ENCODE measurements at regions of chr18 and their contacts with region 1.

Region 1: DNA sequence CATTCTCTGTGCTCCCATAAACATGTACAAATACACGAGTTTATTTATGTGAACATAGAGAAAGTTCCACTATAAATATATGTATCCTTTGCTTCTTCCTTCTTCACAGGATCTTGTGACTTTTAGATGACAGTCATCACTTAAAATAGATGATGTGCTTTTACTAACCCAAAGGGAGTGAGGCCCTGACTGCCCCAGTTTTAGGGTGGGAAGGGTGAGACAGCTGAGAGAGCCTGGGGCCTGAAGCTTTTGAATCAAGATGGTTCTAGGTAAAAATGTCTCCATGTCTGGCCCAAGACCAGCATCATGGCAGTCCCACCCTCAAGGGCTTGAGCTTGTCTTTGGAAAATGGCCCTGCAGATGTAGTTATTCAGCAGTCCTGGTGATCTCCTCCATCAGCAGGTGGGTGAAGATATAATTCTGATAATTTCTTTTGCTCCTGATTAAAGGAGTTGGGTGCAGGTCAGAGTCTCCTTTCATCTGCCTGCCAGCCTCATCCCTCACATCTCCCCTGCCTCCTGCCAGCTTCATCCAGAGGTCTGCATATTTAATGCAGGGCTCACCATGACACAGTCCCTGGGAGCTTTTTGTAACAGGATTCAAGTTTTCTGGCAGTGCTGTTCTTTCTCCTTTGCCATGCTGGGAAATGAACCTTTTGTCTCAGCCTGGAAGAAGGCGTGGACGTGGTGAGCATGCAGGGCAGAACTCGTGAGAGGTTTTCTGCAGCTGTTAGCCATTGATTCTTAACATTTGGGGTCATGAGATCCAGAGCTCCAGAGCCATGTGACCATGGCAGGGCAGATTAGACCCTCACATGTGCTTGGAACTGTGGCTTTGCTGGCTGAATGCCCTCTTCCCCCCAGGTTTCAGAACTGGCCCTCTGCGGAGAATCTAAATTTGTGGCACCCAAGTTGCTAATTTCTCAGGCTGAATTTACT is 2.7 kb downstream of the HRH4 start:
- DNase-seq: no peak
- H3K4me3 Mint-ChIP-seq: no peak overlapping the region
- H3K27ac Mint-ChIP-seq: no peak overlapping the region
- H3K4me1 Mint-ChIP-seq: peaks cover 55% of the 10 kb centered on the region
- H3K27me3 Mint-ChIP-seq: peaks cover 34% of the 10 kb centered on the region

Region 2: DNA sequence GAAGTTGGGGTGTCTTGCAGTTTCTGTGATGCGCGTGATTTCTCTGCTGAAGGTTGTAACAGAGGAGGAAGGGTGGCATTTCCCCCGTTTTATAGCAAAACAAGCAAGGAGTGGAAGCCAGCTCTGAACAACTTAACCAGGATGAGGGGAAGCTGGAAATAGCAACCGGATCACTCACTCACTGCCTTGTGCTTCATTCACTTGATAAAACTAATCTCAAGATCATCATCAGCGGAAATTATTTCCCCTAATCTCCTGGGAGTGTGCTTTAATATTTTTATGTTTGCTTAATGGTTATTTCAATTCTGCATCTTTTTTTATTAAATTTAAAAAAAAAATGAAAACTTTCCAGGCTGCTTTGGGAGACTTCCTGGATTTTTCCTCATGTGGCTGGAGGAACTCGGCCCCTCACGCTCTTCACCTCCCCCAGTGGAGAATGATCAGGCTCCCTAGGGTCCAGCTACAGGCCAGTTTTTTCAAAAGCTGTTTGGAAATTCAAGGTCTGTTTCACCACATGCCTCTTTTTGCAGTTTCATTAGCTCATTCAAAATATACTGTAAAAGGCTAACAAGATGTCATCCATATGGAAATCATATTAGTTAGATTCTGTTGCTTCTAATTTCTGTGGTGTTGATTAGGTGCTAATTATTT is 1296.1 kb before region 1 on chr18:
- intact Hi-C with region 1: no loop called
- DNase-seq: no peak
- H3K4me3 Mint-ChIP-seq: no peak overlapping the region
- H3K27ac Mint-ChIP-seq: no peak overlapping the region
- H3K4me1 Mint-ChIP-seq: peaks cover 6% of the 10 kb centered on the region
- H3K27me3 Mint-ChIP-seq: no peaks in the 10 kb centered on the region

Region 3: GRCh38 chr18:24212939-24213338 is 250.2 kb before region 1 on chr18:
- intact Hi-C with region 1: no loop called
- DNase-seq: no peak
- H3K4me3 Mint-ChIP-seq: no peak overlapping the region
- H3K27ac Mint-ChIP-seq: no peak overlapping the region
- H3K4me1 Mint-ChIP-seq: no peaks in the 10 kb centered on the region
- H3K27me3 Mint-ChIP-seq: peaks cover 15% of the 10 kb centered on the region

Region 4: DNA sequence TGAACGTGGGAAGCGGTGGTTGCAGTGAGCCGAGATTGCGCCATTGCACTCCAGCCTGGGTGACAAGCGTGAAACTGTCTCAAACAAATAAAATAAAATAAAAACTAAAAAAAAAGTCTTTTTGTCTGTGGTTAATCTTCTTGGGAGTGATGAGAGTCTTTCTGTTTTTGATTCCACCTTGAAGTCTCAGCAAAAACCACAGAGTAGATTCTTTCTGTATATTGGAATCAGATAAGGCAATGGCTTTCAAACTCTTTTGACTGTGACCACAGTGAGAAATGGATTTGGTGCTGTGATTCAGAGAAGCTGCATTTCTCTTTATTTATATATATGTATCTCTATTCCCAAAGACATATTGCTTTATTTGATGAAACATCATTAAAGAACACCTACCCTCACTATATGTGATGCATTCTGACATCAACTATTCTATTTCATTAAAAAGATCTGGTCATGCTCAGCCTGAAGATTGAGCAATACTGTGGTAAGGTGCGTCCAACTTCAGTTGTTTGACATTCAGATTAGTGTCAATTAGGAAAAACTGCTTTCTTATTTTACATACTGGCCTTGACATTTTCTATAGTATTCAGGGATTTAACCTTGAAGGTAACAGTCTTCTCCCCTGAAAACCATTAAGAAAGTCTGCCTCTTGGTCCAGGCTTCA is 13.0 kb after region 1 on chr18:
- intact Hi-C with region 1: loop called (anchors 2 kb)
- DNase-seq: no peak
- H3K4me3 Mint-ChIP-seq: no peak overlapping the region
- H3K27ac Mint-ChIP-seq: no peak overlapping the region
- H3K4me1 Mint-ChIP-seq: peaks cover 12% of the 10 kb centered on the region
- H3K27me3 Mint-ChIP-seq: peaks cover 65% of the 10 kb centered on the region